MCF 10A (cell line): ENCODE measurements at regions of chr17 and their contacts with region 1.

Region 1: GRCh38 chr17:83153221-83153611 is 73.8 kb downstream of the METRNL start:
- DNase-seq: no peak
- H3K4me3 Mint-ChIP-seq: no peak overlapping the region
- H3K27ac Mint-ChIP-seq: no peak overlapping the region
- H3K4me1 Mint-ChIP-seq: no peaks in the 10 kb centered on the region
- H3K27me3 Mint-ChIP-seq: peaks cover 52% of the 10 kb centered on the region
- CTCF ChIP-seq: no peak

Region 2: GRCh38 chr17:82932518-82933310 is 220.5 kb before region 1 on chr17:
- CTCF ChIA-PET with region 1: interaction called, 11 read pairs
- POLR2A ChIA-PET with region 1: no interaction called
- intact Hi-C with region 1: no loop called
- DNase-seq: no peak
- H3K4me3 Mint-ChIP-seq: no peak overlapping the region
- H3K27ac Mint-ChIP-seq: no peak overlapping the region
- H3K4me1 Mint-ChIP-seq: peaks cover 6% of the 10 kb centered on the region
- H3K27me3 Mint-ChIP-seq: no peaks in the 10 kb centered on the region
- CTCF ChIP-seq: no peak

Region 3: GRCh38 chr17:83136156-83136555 is 17.1 kb before region 1 on chr17:
- CTCF ChIA-PET with region 1: no interaction called
- POLR2A ChIA-PET with region 1: no interaction called
- intact Hi-C with region 1: no loop called
- DNase-seq: no peak
- H3K4me3 Mint-ChIP-seq: no peak overlapping the region
- H3K27ac Mint-ChIP-seq: no peak overlapping the region
- H3K4me1 Mint-ChIP-seq: peaks cover 4% of the 10 kb centered on the region
- H3K27me3 Mint-ChIP-seq: peaks cover 69% of the 10 kb centered on the region
- CTCF ChIP-seq: no peak

Region 4: DNA sequence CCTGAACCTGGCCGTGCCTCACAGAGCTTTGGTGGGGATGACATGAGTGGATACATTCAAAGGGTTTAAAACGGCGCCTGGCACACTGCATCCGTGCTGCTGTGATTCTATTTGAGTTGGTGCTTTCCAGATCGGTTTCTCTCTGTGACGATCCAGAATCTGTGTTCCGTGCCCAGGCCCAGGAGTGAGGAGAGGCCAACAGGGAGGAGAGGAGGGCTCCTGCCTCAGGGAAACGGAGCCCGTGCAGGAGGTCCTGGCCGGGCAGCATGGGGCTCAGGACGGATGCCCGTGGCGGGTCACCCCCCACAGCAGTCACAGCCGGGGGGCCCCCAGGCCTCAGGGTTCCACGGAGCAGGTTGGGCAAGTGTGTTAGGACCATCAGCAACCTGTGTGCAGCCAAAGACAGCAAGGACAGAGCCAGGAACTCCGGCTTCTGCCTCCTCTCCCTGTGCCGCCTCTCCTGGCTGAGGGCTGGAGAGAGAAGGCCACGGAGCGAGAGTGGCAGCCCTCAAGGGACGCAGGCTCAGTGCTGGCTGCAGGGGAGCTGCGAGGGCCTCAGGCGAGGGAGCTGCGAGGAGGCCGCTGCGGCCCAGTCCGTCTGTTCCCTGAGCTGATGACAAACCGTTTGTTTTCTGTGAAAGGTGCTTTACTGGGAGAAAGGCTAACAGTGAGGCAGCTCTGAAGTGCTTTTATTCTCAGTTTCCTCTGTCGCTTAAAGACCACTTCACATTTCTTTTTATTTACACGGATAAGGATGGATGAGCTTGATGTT is 25.5 kb after region 1 on chr17:
- CTCF ChIA-PET with region 1: no interaction called
- POLR2A ChIA-PET with region 1: no interaction called
- intact Hi-C with region 1: no loop called
- DNase-seq: no peak
- H3K4me3 Mint-ChIP-seq: no peak overlapping the region
- H3K27ac Mint-ChIP-seq: no peak overlapping the region
- H3K4me1 Mint-ChIP-seq: no peaks in the 10 kb centered on the region
- H3K27me3 Mint-ChIP-seq: no peaks in the 10 kb centered on the region
- CTCF ChIP-seq: no peak